IMR-90 (cell line): ENCODE measurements at regions of chr3 and their contacts with region 1.

Region 1: GRCh38 chr3:99023590-99024192 is 122.2 kb upstream of the DCBLD2 start:
- DNase-seq: peak; percentile 56
- ATAC-seq: peak; percentile 84; the same call in 1 of the 2 replicates
- H3K4me3 ChIP-seq: no peak overlapping the region
- H3K27ac ChIP-seq: no peak overlapping the region
- H3K4me1 ChIP-seq: no peaks in the 10 kb centered on the region
- H3K27me3 ChIP-seq: no peaks in the 10 kb centered on the region
- CTCF ChIP-seq: peak; percentile 82
- POLR2A ChIP-seq: no peak
- RAD21 ChIP-seq: peak; percentile 81

Region 2: DNA sequence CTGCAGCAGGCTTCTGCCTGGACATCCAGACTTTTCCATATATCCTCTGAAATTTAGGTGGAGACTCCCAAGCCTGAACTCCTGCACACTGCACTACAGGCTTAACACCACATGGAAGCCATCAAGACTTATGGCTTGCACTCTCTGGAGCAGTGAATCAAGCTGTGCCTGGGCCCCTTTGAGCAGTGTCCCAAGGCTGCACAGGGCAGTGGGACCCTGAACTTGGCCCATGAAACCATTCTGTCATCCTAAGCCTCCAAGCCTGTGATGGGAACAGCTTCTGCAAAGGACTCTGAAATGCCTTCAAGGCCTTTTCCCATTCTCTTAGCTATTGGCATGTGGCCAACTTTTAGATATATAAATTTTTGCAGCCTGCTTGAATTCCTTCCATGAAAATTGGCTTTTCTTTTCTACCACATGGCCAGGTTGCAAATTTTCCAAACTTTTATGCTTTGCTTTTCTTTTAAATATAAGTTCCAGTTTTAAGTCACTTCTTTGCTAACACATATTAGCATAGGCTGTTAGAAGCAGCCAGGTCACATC is 135.6 kb after region 1 on chr3:
- CTCF ChIA-PET with region 1: interaction called, 17 read pairs
- POLR2A ChIA-PET with region 1: no interaction called
- dilution Hi-C with region 1: no loop called
- in situ Hi-C with region 1: no loop called
- intact Hi-C with region 1: no loop called
- DNase-seq: no peak
- ATAC-seq: no peak
- H3K4me3 ChIP-seq: no peak overlapping the region
- H3K27ac ChIP-seq: no peak overlapping the region
- H3K4me1 ChIP-seq: no peaks in the 10 kb centered on the region
- H3K27me3 ChIP-seq: no peaks in the 10 kb centered on the region
- CTCF ChIP-seq: no peak
- POLR2A ChIP-seq: no peak
- RAD21 ChIP-seq: no peak

Region 3: DNA sequence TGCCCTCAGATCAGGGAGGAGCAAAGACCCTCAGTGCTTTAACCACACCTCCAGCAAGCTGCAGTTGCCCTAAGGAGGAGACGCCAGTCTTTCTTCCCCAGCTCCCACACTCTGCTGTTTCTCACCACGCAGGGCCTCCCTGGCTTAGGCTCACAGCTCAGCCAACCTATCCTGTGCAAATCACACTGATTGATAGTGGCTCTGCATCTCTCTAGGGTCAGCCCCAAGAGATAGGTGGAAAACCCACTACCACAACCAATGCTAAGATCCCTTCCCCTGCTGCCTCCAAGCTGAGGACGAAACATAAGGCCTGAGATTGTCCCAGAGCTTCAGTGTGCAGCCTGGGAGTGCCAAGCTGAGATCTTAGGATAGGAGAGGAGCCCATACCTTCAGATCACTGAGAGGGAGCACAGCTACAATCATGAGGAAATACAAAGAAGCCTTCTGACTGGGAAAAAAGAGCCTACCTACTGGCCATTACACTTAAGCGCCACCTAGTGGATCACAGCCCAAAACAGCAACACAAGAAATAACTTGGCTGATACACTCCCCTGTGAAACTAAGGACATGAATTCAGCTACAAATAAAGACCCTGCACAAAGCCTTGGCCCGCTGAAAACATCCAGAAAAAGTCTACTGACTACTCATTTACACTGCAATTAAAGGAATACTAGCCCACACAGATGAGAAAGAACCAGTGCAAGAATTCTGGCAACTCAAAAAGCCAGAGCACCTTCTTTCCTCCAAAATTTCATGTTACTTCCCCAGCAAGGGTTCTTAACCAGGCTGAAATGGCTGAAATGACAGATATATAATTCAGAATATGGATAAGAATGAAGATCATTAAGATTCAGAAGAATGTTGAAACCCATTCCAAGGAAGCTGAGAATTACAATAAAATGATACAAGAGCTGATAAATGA is 149.3 kb after region 1 on chr3:
- CTCF ChIA-PET with region 1: interaction called, 11 read pairs
- POLR2A ChIA-PET with region 1: no interaction called
- dilution Hi-C with region 1: no loop called
- in situ Hi-C with region 1: loop called (anchors 5 kb)
- intact Hi-C with region 1: loop called (anchors 1 kb)
- DNase-seq: peak; percentile 80
- ATAC-seq: peak; percentile 82
- H3K4me3 ChIP-seq: no peak overlapping the region
- H3K27ac ChIP-seq: no peak overlapping the region
- H3K4me1 ChIP-seq: no peaks in the 10 kb centered on the region
- H3K27me3 ChIP-seq: no peaks in the 10 kb centered on the region
- CTCF ChIP-seq: peak; percentile 86
- POLR2A ChIP-seq: no peak
- RAD21 ChIP-seq: peak; percentile 87

Region 4: DNA sequence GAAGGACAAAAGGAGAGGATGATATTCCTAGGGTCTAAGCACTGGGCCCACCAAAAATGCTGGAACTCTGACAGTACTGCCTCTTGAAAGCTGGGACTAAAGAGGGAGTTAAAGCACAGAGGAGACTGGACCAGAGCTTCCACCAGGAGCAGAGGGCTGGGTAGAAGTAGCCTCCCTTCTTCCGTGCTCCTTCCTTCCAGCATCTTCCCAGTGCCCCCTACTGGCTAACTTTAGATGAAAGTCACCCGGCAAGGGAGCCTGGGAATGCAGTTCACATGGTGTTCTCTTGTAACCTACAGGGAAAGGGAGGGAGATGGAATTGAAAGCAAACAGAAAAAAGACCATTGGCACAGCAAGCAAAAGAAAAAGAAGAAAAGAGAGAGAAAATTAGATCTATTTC is 508.6 kb after region 1 on chr3:
- CTCF ChIA-PET with region 1: interaction called, 4 read pairs
- POLR2A ChIA-PET with region 1: interaction called, 4 read pairs
- dilution Hi-C with region 1: no loop called
- in situ Hi-C with region 1: no loop called
- intact Hi-C with region 1: loop called (anchors 1 kb)
- DNase-seq: peak; percentile 77
- ATAC-seq: peak; percentile 64
- H3K4me3 ChIP-seq: no peak overlapping the region
- H3K27ac ChIP-seq: no peak overlapping the region
- H3K4me1 ChIP-seq: peaks cover 13% of the 10 kb centered on the region
- H3K27me3 ChIP-seq: no peaks in the 10 kb centered on the region
- CTCF ChIP-seq: peak; percentile 69
- POLR2A ChIP-seq: no peak
- RAD21 ChIP-seq: peak; percentile 75

Region 5: DNA sequence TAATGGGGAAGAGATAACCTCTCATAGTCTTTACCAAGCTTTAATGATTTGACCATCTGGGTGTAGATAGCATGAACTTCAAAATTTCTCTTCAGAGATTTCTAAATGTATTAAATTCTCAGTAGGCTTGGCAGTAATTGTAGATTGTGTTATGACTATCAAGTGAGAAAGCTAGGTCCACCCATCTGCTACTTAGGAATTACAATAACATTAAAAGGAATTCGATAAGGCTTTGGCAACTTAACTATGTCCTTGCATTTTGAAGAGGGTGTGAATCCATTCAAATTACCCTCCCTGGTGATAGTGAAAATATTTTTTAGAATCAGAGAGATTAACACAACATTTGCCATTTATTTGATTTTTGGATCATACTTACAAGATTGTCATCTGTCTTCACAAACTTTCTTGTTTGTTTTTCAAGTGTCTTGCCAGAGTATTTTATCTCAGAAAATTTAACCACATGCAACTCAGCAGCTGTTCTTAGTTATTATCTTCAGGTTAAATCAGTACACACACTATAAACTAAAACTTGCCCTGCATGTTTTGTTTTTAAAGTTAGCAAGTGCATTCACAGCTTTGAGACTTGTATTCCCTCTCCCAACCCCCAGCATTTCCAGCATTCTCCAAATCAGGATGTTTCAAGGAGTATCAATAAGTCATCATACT is 545.1 kb after region 1 on chr3:
- CTCF ChIA-PET with region 1: no interaction called
- POLR2A ChIA-PET with region 1: no interaction called
- dilution Hi-C with region 1: no loop called
- in situ Hi-C with region 1: no loop called
- intact Hi-C with region 1: no loop called
- DNase-seq: no peak
- ATAC-seq: no peak
- H3K4me3 ChIP-seq: no peak overlapping the region
- H3K27ac ChIP-seq: no peak overlapping the region
- H3K4me1 ChIP-seq: peaks cover under 1% of the 10 kb centered on the region; the same call in 1 of the 2 replicates
- H3K27me3 ChIP-seq: no peaks in the 10 kb centered on the region
- CTCF ChIP-seq: no peak
- POLR2A ChIP-seq: no peak
- RAD21 ChIP-seq: no peak

Region 6: DNA sequence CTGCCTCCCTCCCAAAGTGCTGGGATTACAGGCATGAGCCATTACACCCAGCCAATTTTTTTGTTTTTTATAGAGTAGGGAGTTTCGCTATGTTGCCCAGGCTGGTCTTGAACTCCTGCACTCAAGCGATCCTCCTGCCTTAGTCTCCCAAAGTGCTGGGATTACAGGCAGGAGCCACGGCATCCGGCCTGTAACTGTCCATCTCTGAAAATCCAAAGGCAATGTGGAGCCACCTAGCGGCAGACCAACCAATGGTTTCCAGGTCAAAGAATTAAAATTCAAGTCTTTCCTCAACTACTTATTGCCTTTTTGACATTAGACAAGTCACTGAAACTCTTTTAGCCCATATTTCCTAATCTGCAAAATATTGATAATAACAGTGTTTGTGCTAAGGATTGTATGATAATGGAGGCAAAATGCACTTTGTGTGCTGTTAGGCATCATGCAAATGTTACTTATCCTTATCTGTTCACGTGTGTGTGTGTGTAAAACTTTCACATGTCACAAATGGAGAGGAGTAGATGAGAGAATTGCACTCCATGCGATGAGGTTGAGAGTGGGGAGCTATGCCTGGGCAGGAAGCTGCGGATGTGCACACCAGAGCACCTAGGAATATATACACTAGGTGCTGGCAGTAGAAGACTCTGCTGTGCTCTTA is 663.4 kb after region 1 on chr3:
- CTCF ChIA-PET with region 1: interaction called, 4 read pairs
- POLR2A ChIA-PET with region 1: no interaction called
- dilution Hi-C with region 1: no loop called
- in situ Hi-C with region 1: loop called (anchors 10 kb)
- intact Hi-C with region 1: loop called (anchors 5 kb)
- DNase-seq: peak; percentile 74
- ATAC-seq: peak; percentile 72
- H3K4me3 ChIP-seq: no peak overlapping the region
- H3K27ac ChIP-seq: no peak overlapping the region
- H3K4me1 ChIP-seq: peaks cover 3% of the 10 kb centered on the region; the same call in 1 of the 2 replicates
- H3K27me3 ChIP-seq: no peaks in the 10 kb centered on the region
- CTCF ChIP-seq: peak; percentile 74
- POLR2A ChIP-seq: no peak
- RAD21 ChIP-seq: peak; percentile 79

Region 7: DNA sequence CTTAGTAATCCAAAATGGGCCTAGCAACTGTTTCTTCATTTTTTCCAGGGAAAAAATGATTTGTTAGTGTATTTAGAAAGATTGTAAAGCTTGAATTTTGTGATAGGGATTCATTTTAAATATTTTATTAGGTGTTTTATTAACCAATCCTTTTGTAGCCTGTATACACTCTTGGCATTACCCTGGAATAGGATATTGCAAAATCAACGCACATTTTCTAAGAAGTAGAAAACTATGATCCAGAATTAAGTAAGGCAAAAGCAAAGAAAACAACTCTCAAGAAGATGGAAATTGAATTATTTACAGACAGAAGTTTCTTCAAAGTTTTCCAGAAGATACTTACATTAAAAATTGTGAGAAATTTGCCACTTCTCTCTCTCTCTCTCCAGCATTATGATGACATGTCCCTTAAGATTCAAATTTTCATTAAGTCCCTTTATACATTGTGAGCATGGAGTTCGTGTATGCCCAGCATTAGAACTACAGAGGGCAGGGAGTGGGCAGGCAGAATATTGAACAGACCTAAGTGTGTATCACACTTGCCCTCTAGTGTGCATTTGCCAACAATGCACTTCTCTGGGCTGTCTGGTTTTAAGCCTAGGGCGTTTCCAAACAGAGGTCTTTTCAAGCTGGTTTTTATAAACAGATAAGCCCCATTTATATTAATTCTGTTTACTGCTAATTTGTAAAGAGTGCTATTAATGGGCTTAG is 765.5 kb after region 1 on chr3:
- CTCF ChIA-PET with region 1: interaction called, 9 read pairs
- POLR2A ChIA-PET with region 1: no interaction called
- dilution Hi-C with region 1: no loop called
- in situ Hi-C with region 1: loop called (anchors 10 kb)
- intact Hi-C with region 1: loop called (anchors 1 kb)
- DNase-seq: peak; percentile 67
- ATAC-seq: peak; percentile 97
- H3K4me3 ChIP-seq: no peak overlapping the region
- H3K27ac ChIP-seq: no peak overlapping the region
- H3K4me1 ChIP-seq: peaks cover 4% of the 10 kb centered on the region; the same call in 1 of the 2 replicates
- H3K27me3 ChIP-seq: no peaks in the 10 kb centered on the region
- CTCF ChIP-seq: peak; percentile 77
- POLR2A ChIP-seq: no peak
- RAD21 ChIP-seq: peak; percentile 83

Region 8: DNA sequence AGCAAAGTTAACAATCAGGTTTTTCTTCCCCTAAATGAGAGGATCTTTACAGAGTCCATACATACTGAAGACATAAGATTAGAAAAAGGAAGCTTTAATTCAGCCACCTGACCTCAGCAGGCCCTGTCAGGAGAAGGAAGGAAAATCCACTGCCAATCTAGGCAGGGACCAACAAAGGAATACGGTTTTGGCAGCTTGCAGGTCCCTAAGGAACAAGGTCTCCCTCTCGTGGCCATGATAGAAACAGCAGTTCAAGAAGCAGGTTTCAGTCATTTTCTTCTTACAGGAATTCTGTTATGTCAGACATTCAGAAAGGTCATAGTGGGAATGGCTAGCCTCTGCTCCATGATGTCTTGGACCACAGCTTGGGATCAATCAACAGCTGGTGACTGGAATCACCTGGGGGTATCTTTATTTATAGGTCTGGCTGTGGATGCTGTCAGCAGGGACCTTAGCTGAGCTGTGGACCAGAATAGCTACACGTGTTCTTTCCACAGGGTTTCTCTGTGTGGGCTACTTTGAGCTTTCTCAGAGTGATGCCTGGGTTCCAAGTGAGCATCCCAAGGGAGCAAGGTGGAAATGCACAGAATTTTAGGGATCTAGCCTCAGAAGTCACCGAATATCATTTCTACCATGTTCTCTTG is 784.6 kb after region 1 on chr3:
- CTCF ChIA-PET with region 1: no interaction called
- POLR2A ChIA-PET with region 1: no interaction called
- dilution Hi-C with region 1: no loop called
- in situ Hi-C with region 1: no loop called
- intact Hi-C with region 1: loop called (anchors 5 kb)
- DNase-seq: peak; percentile 84
- ATAC-seq: peak; percentile 90
- H3K4me3 ChIP-seq: no peak overlapping the region
- H3K27ac ChIP-seq: no peak overlapping the region
- H3K4me1 ChIP-seq: no peaks in the 10 kb centered on the region
- H3K27me3 ChIP-seq: no peaks in the 10 kb centered on the region
- CTCF ChIP-seq: peak; percentile 80
- POLR2A ChIP-seq: no peak
- RAD21 ChIP-seq: peak; percentile 79